ENCODE measurements at regions of chr3 and their contacts with region 1.

Region 1: DNA sequence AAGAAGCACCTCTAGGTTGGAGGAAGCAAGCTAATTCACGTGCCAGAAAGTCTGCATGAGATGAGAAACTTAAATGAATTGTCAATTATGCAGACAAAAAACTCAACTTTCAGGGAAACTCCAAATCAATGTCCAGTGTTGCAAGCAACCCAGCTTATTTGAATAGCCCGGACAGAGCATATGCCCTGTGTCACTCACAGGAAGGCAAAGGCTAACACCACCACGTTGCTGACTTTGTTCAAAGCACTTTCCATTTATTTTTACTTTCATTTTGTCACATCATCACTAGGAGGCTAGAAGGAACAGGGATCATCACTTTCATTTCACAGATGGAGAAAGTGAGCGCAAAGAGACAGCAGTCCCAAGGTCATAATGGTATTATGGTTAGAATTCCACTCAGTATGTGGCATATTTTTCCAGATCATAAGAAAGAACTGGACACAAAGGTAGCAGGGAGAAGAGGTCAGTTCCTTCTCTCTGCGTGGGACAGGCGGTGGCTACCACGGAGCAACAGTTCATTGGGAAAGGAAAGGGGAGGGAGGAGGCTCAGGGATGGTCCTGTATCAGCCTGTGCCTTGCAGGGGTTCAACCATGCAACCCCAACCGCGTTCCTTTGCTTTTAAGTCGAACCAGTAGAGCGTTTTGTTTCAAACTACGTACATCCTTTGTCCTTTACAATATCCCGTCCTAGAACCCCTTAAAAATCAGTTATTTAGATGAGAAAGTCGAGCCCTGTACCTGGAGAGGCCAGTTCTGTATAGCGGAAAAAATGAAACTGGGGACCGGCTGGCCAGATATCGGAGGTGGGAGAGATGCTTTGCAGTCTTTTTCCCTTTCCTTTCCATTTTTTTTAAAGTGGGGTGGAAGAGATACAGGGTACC is 1.1 kb downstream of the HEG1 start:
- DNase-seq: no peak
- H3K4me3 ChIP-seq: peak overlapping the region; percentile 71
- H3K27ac ChIP-seq: peak overlapping the region; percentile 71
- H3K27me3 ChIP-seq: no peaks in the 10 kb centered on the region
- CTCF ChIP-seq: peak; percentile 35; the same call in 1 of the 2 replicates

Region 2: GRCh38 chr3:125107861-125108567 is 53.3 kb after region 1 on chr3:
- CTCF ChIA-PET with region 1: interaction called, 3 read pairs
- POLR2A ChIA-PET with region 1: interaction called, 15 read pairs
- DNase-seq: peak; percentile 77
- H3K4me3 ChIP-seq: no peak overlapping the region
- H3K27ac ChIP-seq: peak overlapping the region; percentile 92
- H3K27me3 ChIP-seq: no peaks in the 10 kb centered on the region
- CTCF ChIP-seq: no peak

Measured in AG04450 (cell line).